IMR-90 (cell line): ENCODE measurements at regions of chr12 and their contacts with region 1.

Region 1: GRCh38 chr12:98418357-98419075 is 96.9 kb upstream of the TMPO start:
- DNase-seq: peak; percentile 93
- ATAC-seq: peak; percentile 93
- H3K4me3 ChIP-seq: peak overlapping the region; percentile 18; the same call in 1 of the 2 replicates
- H3K27ac ChIP-seq: peak overlapping the region; percentile 74
- H3K4me1 ChIP-seq: peaks cover 11% of the 10 kb centered on the region
- H3K27me3 ChIP-seq: no peaks in the 10 kb centered on the region
- CTCF ChIP-seq: no peak
- POLR2A ChIP-seq: no peak
- RAD21 ChIP-seq: no peak

Region 2: DNA sequence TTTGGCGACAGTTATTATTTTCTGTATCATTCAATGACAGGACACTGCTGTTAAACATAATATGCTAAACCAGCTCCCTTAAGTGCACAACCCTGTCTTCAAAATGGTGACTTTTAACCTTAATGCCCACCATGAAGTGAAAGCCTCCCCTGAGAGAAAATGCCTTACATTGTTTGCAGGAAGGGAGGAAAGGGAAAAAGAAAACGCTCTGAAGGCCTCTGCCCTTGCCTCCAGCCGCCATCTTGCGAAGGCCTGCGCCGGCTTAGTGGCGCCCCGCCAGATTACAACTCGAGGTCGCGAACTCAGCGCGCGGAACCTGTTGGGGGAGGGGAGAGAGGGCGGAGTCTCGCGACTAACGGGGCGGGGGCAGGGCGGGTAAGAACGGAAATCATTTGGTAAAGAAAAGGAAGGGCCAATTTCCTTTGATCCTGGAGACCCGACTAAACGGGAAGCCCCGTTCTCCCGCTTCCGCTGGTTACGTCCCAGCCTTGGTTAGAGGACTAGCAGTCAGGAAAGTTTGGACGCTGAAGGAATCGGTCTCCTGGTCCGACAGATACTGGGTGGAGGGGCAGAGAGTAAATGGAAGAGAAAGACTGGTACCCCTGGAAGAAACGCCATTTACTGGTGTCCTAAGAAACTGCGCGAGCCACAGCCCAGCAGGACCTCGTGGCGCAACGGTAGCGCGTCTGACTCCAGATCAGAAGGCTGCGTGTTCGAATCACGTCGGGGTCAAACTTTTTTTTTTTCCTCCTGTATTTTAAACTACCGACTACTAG is 85.3 kb after region 1 on chr12:
- CTCF ChIA-PET with region 1: no interaction called
- POLR2A ChIA-PET with region 1: no interaction called
- dilution Hi-C with region 1: no loop called
- in situ Hi-C with region 1: no loop called
- intact Hi-C with region 1: loop called (anchors 1 kb)
- DNase-seq: peak; percentile 89
- ATAC-seq: peak; percentile 90
- H3K4me3 ChIP-seq: peak overlapping the region; percentile 72
- H3K27ac ChIP-seq: peak overlapping the region; percentile 93
- H3K4me1 ChIP-seq: no peaks in the 10 kb centered on the region
- H3K27me3 ChIP-seq: no peaks in the 10 kb centered on the region
- CTCF ChIP-seq: no peak
- POLR2A ChIP-seq: no peak
- RAD21 ChIP-seq: no peak

Region 3: GRCh38 chr12:98532681-98533304 is 114.3 kb after region 1 on chr12:
- CTCF ChIA-PET with region 1: no interaction called
- POLR2A ChIA-PET with region 1: interaction called, 14 read pairs
- dilution Hi-C with region 1: no loop called
- in situ Hi-C with region 1: no loop called
- intact Hi-C with region 1: loop called (anchors 5 kb)
- DNase-seq: peak; percentile 62
- ATAC-seq: peak; percentile 72
- H3K4me3 ChIP-seq: no peak overlapping the region
- H3K27ac ChIP-seq: no peak overlapping the region
- H3K4me1 ChIP-seq: no peaks in the 10 kb centered on the region; the same call in 1 of the 2 replicates
- H3K27me3 ChIP-seq: no peaks in the 10 kb centered on the region
- CTCF ChIP-seq: peak; percentile 56
- POLR2A ChIP-seq: no peak
- RAD21 ChIP-seq: peak; percentile 39

Region 4: DNA sequence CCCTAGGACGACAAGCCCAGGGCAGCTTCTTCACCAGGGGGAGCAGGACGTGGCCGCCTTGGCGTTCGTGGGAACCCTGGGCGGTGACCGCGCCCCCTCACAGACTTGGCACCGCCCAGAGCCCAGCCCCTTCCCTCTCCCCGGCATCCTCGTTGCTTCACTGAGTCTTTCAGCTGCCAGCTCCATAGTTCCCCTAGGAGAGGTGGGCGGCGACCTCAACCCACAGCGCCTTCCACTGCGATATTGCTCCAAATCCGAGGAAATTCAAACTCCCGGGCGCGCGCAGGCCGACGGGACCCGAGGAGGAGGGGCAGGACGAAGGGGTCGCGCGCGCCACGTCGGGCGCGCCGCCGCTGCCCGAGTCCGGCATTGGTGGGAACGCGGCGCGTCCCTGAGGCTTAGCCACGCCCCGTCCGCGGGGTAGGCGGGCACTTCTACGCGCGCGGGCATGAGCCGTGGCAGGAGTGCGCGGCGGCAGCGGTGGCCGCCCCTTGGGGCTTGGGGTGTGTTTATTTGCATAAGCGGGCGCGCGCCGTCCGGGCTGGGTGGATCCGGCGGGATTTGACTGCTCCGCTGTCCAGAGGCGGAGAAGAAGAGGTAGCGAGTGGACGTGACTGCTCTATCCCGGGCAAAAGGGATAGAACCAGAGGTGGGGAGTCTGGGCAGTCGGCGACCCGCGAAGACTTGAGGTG is 226.3 kb after region 1 on chr12 and contains the starts of genes APAF1 and IKBIP:
- CTCF ChIA-PET with region 1: no interaction called
- POLR2A ChIA-PET with region 1: no interaction called
- dilution Hi-C with region 1: no loop called
- in situ Hi-C with region 1: loop called (anchors 10 kb)
- intact Hi-C with region 1: loop called (anchors 2 kb)
- DNase-seq: peak; percentile 94
- ATAC-seq: peak; percentile 96
- H3K4me3 ChIP-seq: peak within 1 kb of the TSS; percentile 67
- H3K27ac ChIP-seq: peak within 1 kb of the TSS; percentile 69
- H3K4me1 ChIP-seq: no peaks in the 10 kb centered on the region; the same call in 1 of the 2 replicates
- H3K27me3 ChIP-seq: no peaks in the 10 kb centered on the region
- CTCF ChIP-seq: no peak
- POLR2A ChIP-seq: peak; percentile 86
- RAD21 ChIP-seq: no peak
- total RNA-seq, gene APAF1: 32.8 and 42.2 TPM in 2 replicates
- total RNA-seq, gene IKBIP: 37.1 and 88.3 TPM in 2 replicates